IMR-90 (cell line): ENCODE measurements at regions of chr2 and their contacts with region 1.

Region 1: GRCh38 chr2:115327061-115327460 is 884.6 kb downstream of the DPP10 start:
- DNase-seq: no peak
- ATAC-seq: no peak
- H3K4me3 ChIP-seq: no peak overlapping the region
- H3K27ac ChIP-seq: no peak overlapping the region
- H3K4me1 ChIP-seq: no peaks in the 10 kb centered on the region
- H3K27me3 ChIP-seq: no peaks in the 10 kb centered on the region
- CTCF ChIP-seq: no peak
- POLR2A ChIP-seq: no peak
- RAD21 ChIP-seq: no peak

Region 2: DNA sequence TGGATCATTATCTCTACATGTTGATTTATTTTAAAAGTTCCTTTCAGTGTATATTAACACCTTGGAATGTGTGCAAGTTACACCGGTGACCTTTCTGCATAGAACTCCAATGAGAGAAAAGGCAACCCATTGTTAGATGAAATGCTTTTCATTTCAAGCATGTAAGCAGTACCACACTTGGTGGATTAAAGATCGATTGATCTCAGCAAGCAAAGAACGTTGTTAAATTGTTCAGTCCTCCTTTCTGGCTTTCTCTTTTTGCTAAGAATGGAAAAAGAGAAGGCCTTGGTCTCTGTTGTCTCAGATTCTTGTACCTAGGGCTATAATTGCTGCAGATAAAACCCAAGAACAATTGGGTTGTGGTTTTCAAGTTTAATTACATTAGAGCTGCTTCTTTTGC is 41.6 kb before region 1 on chr2:
- CTCF ChIA-PET with region 1: no interaction called
- POLR2A ChIA-PET with region 1: no interaction called
- dilution Hi-C with region 1: no loop called
- in situ Hi-C with region 1: no loop called
- intact Hi-C with region 1: loop called (anchors 2 kb)
- DNase-seq: no peak
- ATAC-seq: no peak
- H3K4me3 ChIP-seq: no peak overlapping the region
- H3K27ac ChIP-seq: no peak overlapping the region
- H3K4me1 ChIP-seq: no peaks in the 10 kb centered on the region
- H3K27me3 ChIP-seq: no peaks in the 10 kb centered on the region
- CTCF ChIP-seq: no peak
- POLR2A ChIP-seq: no peak
- RAD21 ChIP-seq: no peak

Region 3: GRCh38 chr2:115635430-115635829 is 308.4 kb after region 1 on chr2:
- CTCF ChIA-PET with region 1: no interaction called
- POLR2A ChIA-PET with region 1: no interaction called
- dilution Hi-C with region 1: no loop called
- in situ Hi-C with region 1: no loop called
- intact Hi-C with region 1: no loop called
- DNase-seq: no peak
- ATAC-seq: no peak
- H3K4me3 ChIP-seq: no peak overlapping the region
- H3K27ac ChIP-seq: no peak overlapping the region
- H3K4me1 ChIP-seq: no peaks in the 10 kb centered on the region
- H3K27me3 ChIP-seq: no peaks in the 10 kb centered on the region
- CTCF ChIP-seq: no peak
- POLR2A ChIP-seq: no peak
- RAD21 ChIP-seq: no peak

Region 4: GRCh38 chr2:116416731-116417377 is 1089.8 kb after region 1 on chr2:
- CTCF ChIA-PET with region 1: no interaction called
- POLR2A ChIA-PET with region 1: interaction called, 10 read pairs
- dilution Hi-C with region 1: no loop called
- in situ Hi-C with region 1: no loop called
- intact Hi-C with region 1: no loop called
- DNase-seq: no peak
- ATAC-seq: no peak
- H3K4me3 ChIP-seq: no peak overlapping the region
- H3K27ac ChIP-seq: no peak overlapping the region
- H3K4me1 ChIP-seq: no peaks in the 10 kb centered on the region
- H3K27me3 ChIP-seq: no peaks in the 10 kb centered on the region
- CTCF ChIP-seq: no peak
- POLR2A ChIP-seq: no peak
- RAD21 ChIP-seq: no peak